Activated B cell treated with CpG ODN at 0.5 μM for 24 hours (primary cell): ENCODE measurements at regions of chr1 and their contacts with region 1.

Region 1: DNA sequence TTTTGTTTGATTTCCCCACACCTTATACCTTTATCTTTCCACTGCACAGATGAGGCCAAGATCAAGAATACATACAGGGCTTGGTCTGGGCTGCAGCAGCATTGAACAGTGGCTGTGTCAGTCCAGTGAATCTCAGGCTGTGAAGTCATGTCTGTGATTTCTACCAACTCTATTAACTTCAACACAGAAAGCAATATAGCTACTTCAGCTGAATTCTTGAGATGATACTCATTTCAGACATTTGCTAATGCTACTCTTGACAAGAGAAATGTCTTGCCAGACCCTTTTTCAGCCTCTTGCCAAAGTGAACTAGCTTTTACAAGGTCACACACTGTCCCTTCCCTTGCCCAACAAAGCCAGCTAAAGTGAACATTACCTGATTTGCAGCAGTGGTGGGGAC is 25.1 kb upstream of the HSD3B1 start:
- DNase-seq: no peak
- ATAC-seq: no peak
- H3K4me3 Mint-ChIP-seq: no peak overlapping the region
- H3K27ac Mint-ChIP-seq: no peak overlapping the region
- H3K4me1 Mint-ChIP-seq: no peaks in the 10 kb centered on the region
- H3K27me3 Mint-ChIP-seq: no peaks in the 10 kb centered on the region
- CTCF ChIP-seq: no peak

Region 2: GRCh38 chr1:119420644-119421043 is 61.3 kb before region 1 on chr1:
- CTCF ChIA-PET with region 1: no interaction called
- POLR2A ChIA-PET with region 1: no interaction called
- intact Hi-C with region 1: loop called (anchors 2 kb)
- DNase-seq: no peak
- ATAC-seq: no peak
- H3K4me3 Mint-ChIP-seq: no peak overlapping the region
- H3K27ac Mint-ChIP-seq: no peak overlapping the region
- H3K4me1 Mint-ChIP-seq: no peaks in the 10 kb centered on the region
- H3K27me3 Mint-ChIP-seq: no peaks in the 10 kb centered on the region
- CTCF ChIP-seq: no peak